ENCODE measurements at regions of chr20 and their contacts with region 1.

Region 1: GRCh38 chr20:5353624-5354496 is 37.1 kb upstream of the PROKR2 start:
- DNase-seq: no peak
- H3K4me3 Mint-ChIP-seq: no peak overlapping the region
- H3K27ac Mint-ChIP-seq: peak overlapping the region; percentile 59
- H3K4me1 Mint-ChIP-seq: peaks cover 16% of the 10 kb centered on the region
- H3K27me3 Mint-ChIP-seq: no peaks in the 10 kb centered on the region

Region 2: DNA sequence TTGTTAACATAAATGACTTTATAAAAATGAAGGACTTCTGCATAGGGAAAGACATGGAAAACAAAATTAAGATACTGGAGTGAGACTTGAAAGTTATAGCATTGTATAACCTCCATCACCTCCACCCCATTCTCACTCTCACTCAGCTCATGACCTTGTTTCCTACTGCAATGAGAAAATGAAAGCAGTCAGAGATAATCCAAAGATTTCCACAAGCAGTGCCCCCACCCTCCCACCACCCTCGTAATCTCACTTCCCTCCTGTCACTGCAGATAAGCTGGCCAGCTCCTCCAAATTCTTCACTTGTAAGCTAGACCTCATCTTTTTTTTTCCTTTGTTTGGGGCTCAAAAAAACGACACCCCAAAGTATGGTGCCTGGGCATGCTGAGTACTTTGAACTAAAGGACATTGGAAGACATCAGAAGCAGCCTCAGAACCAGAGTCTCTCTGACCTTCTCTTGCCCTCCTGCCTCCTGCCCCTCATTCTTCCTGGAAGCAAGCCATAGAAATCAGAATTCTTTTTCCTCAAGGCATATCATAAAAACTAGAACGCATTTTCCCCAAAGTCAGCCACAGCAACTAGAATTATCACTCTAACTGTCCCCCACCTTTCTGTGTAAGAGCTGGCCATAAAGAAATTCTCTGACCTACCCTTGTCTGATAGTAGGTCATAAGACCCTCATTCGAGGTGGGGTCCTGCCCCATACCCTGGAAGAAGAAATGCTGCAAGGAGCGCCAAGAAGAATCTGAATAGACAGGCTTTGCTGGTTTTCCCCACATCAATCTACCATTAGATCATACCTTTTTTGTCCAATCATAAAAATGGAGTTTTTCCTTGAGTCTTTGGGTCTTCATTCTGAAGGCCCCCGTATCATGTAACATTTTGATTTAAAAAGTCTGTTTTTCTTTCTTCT is 16.0 kb after region 1 on chr20:
- intact Hi-C with region 1: loop called (anchors 2 kb)
- DNase-seq: peak; percentile 30
- H3K4me3 Mint-ChIP-seq: no peak overlapping the region
- H3K27ac Mint-ChIP-seq: no peak overlapping the region
- H3K4me1 Mint-ChIP-seq: peaks cover 7% of the 10 kb centered on the region
- H3K27me3 Mint-ChIP-seq: peaks cover 3% of the 10 kb centered on the region

Region 3: GRCh38 chr20:5770987-5771318 is 417.1 kb after region 1 on chr20:
- intact Hi-C with region 1: no loop called
- DNase-seq: no peak
- H3K4me3 Mint-ChIP-seq: no peak overlapping the region
- H3K27ac Mint-ChIP-seq: no peak overlapping the region
- H3K4me1 Mint-ChIP-seq: peaks cover 8% of the 10 kb centered on the region
- H3K27me3 Mint-ChIP-seq: no peaks in the 10 kb centered on the region

Region 4: DNA sequence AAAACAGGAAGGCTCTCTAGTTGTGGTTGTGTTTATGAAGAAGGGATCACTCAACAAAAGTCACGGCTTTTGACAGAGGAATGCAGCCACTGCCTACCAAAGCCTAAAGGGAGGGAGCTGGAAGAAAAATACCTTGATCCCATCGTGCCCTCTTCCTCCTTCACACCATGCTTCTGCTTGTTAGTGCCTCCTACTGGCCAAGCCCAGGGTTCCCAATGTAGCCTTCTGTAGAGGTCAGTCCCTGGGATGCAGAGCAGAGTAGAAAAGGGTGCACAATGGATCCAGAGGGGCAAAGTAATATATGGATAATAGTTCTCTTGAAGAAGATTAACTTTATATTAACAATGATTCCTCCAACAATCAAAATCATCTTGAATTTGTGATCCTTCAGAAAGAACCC is 1062.5 kb after region 1 on chr20:
- intact Hi-C with region 1: no loop called
- DNase-seq: peak; percentile 22
- H3K4me3 Mint-ChIP-seq: no peak overlapping the region
- H3K27ac Mint-ChIP-seq: no peak overlapping the region
- H3K4me1 Mint-ChIP-seq: no peaks in the 10 kb centered on the region
- H3K27me3 Mint-ChIP-seq: no peaks in the 10 kb centered on the region